ENCODE measurements at regions of chr6 and their contacts with region 1.

Region 1: DNA sequence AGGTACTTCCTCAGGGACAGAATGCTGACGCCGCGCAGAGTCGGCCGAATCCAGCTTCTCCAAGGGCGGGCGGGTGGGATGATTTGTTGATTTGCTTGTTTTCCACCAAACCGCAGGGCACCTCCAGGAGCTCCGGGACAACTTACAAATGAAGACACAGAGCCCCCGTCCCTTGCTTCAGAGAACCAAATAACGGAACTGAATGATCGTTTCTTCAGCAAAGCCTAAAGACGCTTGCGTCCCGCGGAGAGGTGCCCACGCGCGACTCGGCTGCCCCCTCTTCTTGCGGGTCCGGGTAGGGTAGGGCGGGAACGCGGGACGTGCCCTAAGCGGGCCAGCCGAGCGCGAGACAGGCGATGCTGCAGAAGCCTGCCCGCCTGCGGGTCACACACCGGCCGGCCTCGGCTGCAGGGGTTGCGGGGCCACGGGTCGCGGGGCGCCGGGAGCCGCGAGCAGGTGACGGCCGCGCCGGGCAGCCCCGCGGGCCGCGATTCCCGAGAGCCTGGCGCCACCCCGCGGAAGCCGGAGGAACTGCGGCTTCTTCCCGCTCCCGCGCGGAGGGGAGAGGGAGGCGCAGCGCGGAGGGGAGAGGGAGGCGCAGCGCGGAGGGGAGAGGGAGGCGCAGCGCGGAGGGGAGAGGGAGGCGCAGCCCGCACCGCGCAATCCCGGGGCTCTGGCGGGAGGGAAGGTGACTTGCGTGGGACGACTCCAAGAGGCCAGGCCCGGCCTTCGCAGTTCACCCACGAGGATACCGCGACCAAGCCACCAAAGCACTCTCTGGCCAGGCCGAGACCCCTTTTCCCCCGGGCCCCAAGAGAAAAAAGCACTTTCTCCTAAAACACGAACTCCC is 7.7 kb upstream of the FOXF2 start:
- DNase-seq: peak in 1 of 2 experiments; percentile 95
- H3K4me3 ChIP-seq: peak overlapping the region; percentile 1 to 63 (median 22); a peak in 4 of 8 replicates
- H3K27ac ChIP-seq: no peak overlapping the region
- H3K4me1 ChIP-seq: peaks cover 0 to 37% (median 17%) of the 10 kb centered on the region in 4 experiments; a peak in 5 of 7 replicates
- H3K27me3 ChIP-seq: peaks cover 94 to 100% (median 98%) of the 10 kb centered on the region in 4 experiments
- CTCF ChIP-seq: peak in 2 of 3 experiments; percentile 73 to 78; a peak in 3 of 4 replicates
- EP300 ChIP-seq: no peak
- POLR2A ChIP-seq: no peak
- RAD21 ChIP-seq: peak; percentile 75 to 88

Region 2: DNA sequence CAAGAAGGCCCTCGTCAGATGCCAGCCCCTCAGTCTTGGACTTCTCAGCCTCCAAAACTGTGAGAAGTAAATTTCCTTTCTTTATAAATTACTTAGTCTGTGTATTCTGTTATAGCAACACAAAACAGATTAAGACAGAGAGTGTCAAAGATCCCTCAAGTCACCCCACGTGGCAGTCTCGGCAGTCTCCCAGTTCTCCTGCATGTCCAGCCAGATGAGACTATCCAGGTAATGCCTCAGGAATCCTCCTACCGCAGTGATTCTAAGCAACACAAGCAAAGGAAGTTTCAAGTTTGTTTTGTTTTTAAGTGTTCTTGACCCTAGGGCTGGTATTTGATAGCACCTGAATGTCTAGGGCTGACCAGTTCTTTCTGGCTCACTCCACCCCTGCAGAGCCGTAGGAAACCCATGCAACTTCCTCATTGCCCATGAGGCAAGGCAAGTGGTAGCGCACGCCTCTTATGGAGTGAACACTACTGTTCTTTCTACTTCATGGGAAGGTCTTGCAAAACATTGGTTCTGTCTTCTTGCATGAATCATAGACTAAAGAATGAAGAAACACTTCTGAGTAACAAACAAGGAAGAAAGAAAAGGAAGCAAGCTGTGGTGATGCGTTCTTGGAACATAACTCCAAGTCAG is 94.6 kb before region 1 on chr6:
- CTCF ChIA-PET with region 1: no interaction called
- POLR2A ChIA-PET with region 1: no interaction called
- DNase-seq: no peak
- H3K4me3 ChIP-seq: no peak overlapping the region
- H3K27ac ChIP-seq: no peak overlapping the region
- H3K4me1 ChIP-seq: peaks cover 0 to 2% (median 0%) of the 10 kb centered on the region in 4 experiments; a peak in 2 of 7 replicates
- H3K27me3 ChIP-seq: no peaks in the 10 kb centered on the region
- CTCF ChIP-seq: no peak
- EP300 ChIP-seq: no peak
- POLR2A ChIP-seq: no peak
- RAD21 ChIP-seq: no peak

Region 3: DNA sequence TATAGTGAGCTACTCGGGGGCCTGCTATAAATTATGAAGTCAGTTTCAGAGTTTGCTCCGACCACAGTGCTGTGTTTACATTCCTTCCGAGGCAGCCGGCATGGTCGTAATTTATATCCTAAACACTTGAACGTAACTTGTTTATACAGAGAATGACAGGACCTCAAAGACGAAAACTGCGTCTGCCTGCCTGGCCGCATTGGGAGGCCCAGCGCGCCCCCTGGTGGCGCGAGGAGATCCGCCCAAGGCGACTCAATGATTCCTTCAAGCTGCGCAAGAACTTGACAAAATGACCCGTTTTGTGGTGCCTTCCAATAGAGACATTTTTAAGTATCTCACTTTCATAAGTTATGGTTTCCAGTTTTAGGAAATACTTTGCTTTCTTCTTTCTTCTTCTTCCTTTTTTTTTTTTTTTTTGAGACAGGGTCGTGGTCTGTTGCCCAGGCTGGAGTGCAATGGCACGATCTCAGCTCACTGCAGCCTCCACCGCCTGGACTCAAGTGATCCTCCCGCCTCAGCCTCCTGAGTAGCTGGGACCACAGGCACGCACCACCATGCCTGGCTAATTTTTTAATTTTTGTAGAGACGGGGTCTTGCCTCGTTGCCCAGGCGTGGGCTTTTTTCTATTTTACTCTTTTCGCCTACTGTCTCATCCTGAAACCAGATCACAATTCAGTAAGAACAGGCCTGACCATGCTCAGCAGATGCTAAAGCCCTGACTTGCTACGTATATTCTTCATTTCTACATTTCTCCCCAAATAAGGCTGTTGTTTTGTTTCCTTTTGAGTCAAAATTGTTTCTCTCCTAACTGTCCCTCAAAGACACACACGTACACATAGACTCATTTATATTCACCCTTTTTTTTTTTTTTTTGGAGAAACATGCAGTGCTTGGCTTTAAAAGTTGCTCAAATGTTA is 15.5 kb after region 1 on chr6:
- CTCF ChIA-PET with region 1: interaction called, 17 read pairs
- POLR2A ChIA-PET with region 1: interaction called, 11 read pairs
- DNase-seq: peak in 1 of 2 experiments; percentile 82
- H3K4me3 ChIP-seq: no peak overlapping the region
- H3K27ac ChIP-seq: no peak overlapping the region
- H3K4me1 ChIP-seq: peaks cover 0 to 15% (median 5%) of the 10 kb centered on the region in 4 experiments; a peak in 5 of 7 replicates
- H3K27me3 ChIP-seq: peaks cover 59 to 80% (median 70%) of the 10 kb centered on the region in 4 experiments
- CTCF ChIP-seq: peak; percentile 83 to 92 (median 92)
- EP300 ChIP-seq: no peak
- POLR2A ChIP-seq: no peak
- RAD21 ChIP-seq: peak; percentile 75 to 83

Measured in H1 (cell line).